ENCODE measurements at regions of chr1 and their contacts with region 1.

Region 1: DNA sequence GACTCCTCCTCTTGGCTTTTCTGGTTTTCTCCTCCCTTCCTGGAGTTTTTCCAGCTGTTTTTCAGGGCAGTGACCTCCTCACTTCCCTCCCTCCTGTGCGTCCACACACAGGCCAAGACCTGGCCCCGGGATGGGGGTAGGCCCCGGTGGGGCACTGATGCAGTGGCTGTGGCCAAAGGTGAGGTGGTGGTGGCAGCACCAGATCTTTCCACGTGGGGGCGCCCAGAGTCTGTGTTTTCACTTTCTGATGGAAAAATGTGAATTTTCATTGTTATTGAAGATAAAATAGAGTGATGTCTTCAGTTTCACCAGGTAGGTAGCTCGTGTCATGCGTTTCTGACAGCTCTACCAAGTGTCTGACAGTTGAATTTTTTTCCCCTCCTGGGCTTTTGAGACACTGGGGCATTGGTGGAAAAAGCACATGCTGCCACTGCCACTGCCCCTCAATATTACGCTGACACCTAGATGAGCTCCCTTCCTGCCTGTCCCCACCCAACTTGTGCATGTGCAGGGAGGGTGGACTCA is 39.9 kb upstream of the MAGOH start:
- DNase-seq: no peak

Region 2: DNA sequence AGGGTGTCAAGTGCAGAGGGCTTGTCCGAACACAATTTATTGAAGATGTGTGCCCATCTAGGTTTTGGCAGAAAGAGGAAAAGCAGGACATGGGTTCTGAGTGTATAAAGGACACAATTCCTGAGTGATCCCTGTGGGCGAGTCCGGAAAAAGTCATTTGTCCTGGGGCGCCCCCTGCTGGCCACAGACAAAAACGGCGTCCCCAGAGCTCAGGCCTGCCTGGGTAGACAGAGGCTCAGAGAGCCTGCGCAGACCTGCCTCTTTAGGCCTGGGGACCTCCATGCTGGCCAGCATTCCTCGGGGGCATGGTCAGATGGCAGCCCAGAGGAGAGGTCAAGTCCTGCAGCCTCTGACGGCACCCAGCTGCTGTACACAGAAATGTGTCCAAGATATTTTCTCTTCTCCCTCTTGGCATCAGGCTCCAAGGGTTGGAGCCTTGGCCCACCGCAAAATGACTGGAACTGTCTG is 115.1 kb after region 1 on chr1:
- intact Hi-C with region 1: loop called (anchors 1 kb)
- DNase-seq: peak; percentile 89

Measured in cardiac septum (tissue), 1 donor.